HepG2 (cell line): ENCODE measurements at regions of chr4 and their contacts with region 1.

Region 1: GRCh38 chr4:184745831-184746795 is 12.2 kb upstream of the CENPU start:
- DNase-seq: peak; percentile 62
- ATAC-seq: peak; percentile 37
- H3K4me3 ChIP-seq: no peak overlapping the region; a peak in 1 of 6 replicates
- H3K27ac ChIP-seq: no peak overlapping the region
- H3K4me1 ChIP-seq: peaks cover 53% of the 10 kb centered on the region
- H3K27me3 ChIP-seq: no peaks in the 10 kb centered on the region
- CTCF ChIP-seq: peak; percentile 79
- EP300 ChIP-seq: no peak
- POLR2A ChIP-seq: no peak
- RAD21 ChIP-seq: peak; percentile 75

Region 2: GRCh38 chr4:184815046-184815877 is 69.1 kb after region 1 on chr4:
- CTCF ChIA-PET with region 1: no interaction called
- POLR2A ChIA-PET with region 1: no interaction called
- in situ Hi-C with region 1: loop called (anchors 10 kb)
- intact Hi-C with region 1: loop called (anchors 5 kb)
- DNase-seq: peak; percentile 74
- ATAC-seq: peak; percentile 90
- H3K4me3 ChIP-seq: peak overlapping the region; percentile 3 to 43 (median 41); a peak in 3 of 6 replicates
- H3K27ac ChIP-seq: no peak overlapping the region
- H3K4me1 ChIP-seq: peaks cover 81% of the 10 kb centered on the region
- H3K27me3 ChIP-seq: no peaks in the 10 kb centered on the region
- CTCF ChIP-seq: no peak
- EP300 ChIP-seq: 0 out of 4 replicates have a peak, but pooled peaks of 1 of the 2 experiments have one; percentile 11
- POLR2A ChIP-seq: no peak
- RAD21 ChIP-seq: no peak

Region 3: DNA sequence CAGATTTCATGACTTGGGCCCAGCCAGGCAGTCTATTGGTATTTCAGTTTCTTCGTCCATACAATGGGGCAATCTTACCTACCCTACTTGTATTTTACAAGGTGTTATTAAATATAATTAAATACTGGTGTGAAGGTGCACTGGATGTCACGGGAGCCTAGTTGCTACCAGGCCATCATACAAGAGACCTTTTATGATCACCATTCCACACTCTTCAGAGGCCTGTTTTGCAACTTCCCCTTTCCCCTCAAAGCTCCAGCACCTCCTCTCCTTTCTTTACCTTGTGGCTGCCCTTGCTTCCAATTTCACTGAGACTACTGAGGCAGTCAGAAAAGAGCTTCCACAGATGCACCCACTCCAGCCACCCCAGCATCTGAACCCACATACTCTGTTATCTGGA is 178.4 kb after region 1 on chr4:
- CTCF ChIA-PET with region 1: no interaction called
- POLR2A ChIA-PET with region 1: no interaction called
- in situ Hi-C with region 1: no loop called
- intact Hi-C with region 1: loop called (anchors 2 kb)
- DNase-seq: no peak
- ATAC-seq: no peak
- H3K4me3 ChIP-seq: no peak overlapping the region
- H3K27ac ChIP-seq: no peak overlapping the region
- H3K4me1 ChIP-seq: no peaks in the 10 kb centered on the region
- H3K27me3 ChIP-seq: no peaks in the 10 kb centered on the region
- CTCF ChIP-seq: no peak
- EP300 ChIP-seq: no peak
- POLR2A ChIP-seq: no peak
- RAD21 ChIP-seq: no peak

Region 4: GRCh38 chr4:184994010-184994622 is 248.0 kb after region 1 on chr4:
- CTCF ChIA-PET with region 1: no interaction called
- POLR2A ChIA-PET with region 1: no interaction called
- in situ Hi-C with region 1: no loop called
- intact Hi-C with region 1: no loop called
- DNase-seq: no peak
- ATAC-seq: 0 out of 3 replicates have a peak, but pooled peaks have one; percentile 22
- H3K4me3 ChIP-seq: no peak overlapping the region
- H3K27ac ChIP-seq: no peak overlapping the region
- H3K4me1 ChIP-seq: no peaks in the 10 kb centered on the region
- H3K27me3 ChIP-seq: peaks cover 5 to 35% of the 10 kb centered on the region in 2 experiments; a peak in 4 of 5 replicates
- CTCF ChIP-seq: no peak
- EP300 ChIP-seq: no peak
- POLR2A ChIP-seq: no peak
- RAD21 ChIP-seq: no peak

Region 5: GRCh38 chr4:185005216-185005819 is 259.2 kb after region 1 on chr4:
- CTCF ChIA-PET with region 1: interaction called, 5 read pairs
- POLR2A ChIA-PET with region 1: interaction called, 3 read pairs
- in situ Hi-C with region 1: no loop called
- intact Hi-C with region 1: loop called (anchors 1 kb)
- DNase-seq: peak; percentile 52
- ATAC-seq: peak; percentile 81
- H3K4me3 ChIP-seq: peak overlapping the region in 1 of 3 experiments; percentile 57; a peak in 1 of 6 replicates
- H3K27ac ChIP-seq: no peak overlapping the region
- H3K4me1 ChIP-seq: peaks cover 38% of the 10 kb centered on the region
- H3K27me3 ChIP-seq: peaks cover 3 to 37% of the 10 kb centered on the region in 2 experiments; a peak in 4 of 5 replicates
- CTCF ChIP-seq: peak; percentile 85
- EP300 ChIP-seq: no peak
- POLR2A ChIP-seq: no peak
- RAD21 ChIP-seq: peak; percentile 54; the same call in 1 of the 2 replicates

Region 6: DNA sequence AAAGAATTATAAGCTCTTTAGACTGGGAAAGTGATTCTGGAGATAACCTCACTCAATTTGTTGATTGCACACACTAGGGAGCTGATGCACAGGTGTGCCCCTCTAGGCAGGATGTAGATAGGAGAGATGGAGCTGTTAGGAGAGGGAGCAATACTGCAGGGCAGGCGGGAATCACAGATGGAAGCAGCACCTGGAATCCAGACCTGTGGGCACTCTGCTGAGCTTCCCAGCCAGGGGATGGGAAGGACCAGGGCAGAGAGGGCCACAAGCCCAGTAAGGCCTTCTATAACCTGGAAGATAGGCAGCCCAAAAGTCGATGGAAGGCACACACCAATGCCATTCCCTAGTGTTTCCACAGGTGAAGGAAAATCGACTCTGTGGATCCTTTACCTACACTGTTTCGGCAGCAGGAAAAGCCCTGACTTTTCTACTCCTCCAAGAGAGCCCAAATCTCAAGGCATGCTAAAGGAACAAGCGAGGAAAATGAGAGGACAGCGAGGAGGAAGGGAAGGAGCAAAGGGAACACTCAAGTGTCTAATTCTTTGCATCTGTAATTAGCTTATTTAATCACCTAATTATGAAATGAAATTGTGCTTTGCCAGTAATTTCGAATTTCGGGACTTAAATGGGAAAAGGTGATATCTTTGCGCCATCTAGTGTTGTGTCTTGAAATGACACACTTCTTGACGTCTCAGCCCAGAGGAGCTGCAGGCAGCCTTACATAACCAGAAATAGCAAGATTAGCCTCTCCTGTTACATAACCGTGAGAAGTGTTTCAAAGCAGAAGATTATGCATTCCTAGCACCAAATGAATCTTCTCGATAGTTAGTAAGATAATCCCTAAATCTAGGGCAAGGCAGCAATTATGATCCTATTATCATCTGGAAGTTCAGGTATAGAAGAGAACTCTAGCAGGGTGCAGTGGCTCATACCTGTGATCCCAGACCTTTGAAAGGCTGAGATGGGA is 1291.9 kb after region 1 on chr4:
- CTCF ChIA-PET with region 1: no interaction called
- POLR2A ChIA-PET with region 1: no interaction called
- in situ Hi-C with region 1: no loop called
- intact Hi-C with region 1: loop called (anchors 10 kb)
- DNase-seq: peak; percentile 59
- ATAC-seq: peak; percentile 73
- H3K4me3 ChIP-seq: no peak overlapping the region
- H3K27ac ChIP-seq: no peak overlapping the region
- H3K4me1 ChIP-seq: peaks cover 12% of the 10 kb centered on the region; the same call in 1 of the 2 replicates
- H3K27me3 ChIP-seq: peaks cover 1 to 17% of the 10 kb centered on the region in 2 experiments; a peak in 4 of 5 replicates
- CTCF ChIP-seq: peak; percentile 88
- EP300 ChIP-seq: no peak
- POLR2A ChIP-seq: no peak
- RAD21 ChIP-seq: peak; percentile 77